MCF 10A (cell line): ENCODE measurements at regions of chr13 and their contacts with region 1.

Region 1: DNA sequence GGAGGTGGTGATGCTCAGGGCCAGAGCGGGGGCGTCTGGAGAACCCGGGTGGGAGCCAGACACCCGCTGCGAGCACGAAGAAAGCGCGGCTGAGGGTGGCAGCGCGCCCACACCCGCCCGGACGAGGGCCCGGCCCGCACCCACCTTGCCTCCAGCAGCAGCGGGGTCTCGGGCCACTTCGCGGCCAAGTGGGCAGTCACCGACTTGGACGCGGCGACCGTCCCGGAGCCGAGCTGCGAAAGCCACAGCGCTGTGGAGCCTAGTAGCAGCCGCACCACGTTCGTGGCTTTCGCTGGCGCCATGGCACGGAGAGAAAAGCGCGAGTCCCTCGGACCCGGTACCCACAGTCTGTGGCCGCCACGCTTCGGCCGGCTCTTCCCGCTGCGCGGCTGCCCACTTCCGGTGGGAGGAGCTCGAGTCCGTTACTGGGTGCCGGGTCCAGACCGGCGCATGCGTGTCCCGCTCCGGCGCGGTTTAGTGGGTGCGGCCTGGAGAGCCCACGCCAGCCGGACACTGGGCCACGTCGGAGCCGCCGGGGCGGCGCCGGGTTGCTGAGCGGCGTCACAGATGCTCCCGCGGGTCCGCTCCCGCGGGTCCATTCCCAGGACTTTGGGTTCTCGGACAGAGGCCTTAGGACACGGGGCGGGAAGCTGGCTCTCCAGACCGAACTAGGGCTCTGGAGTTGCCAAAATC is at the start of gene UGGT2:
- DNase-seq: peak; percentile 97
- H3K4me3 Mint-ChIP-seq: peak within 1 kb of the TSS; percentile 95
- H3K27ac Mint-ChIP-seq: peak within 1 kb of the TSS; percentile 92
- H3K4me1 Mint-ChIP-seq: peaks cover 23% of the 10 kb centered on the region
- H3K27me3 Mint-ChIP-seq: no peaks in the 10 kb centered on the region
- CTCF ChIP-seq: no peak
- total RNA-seq, gene UGGT2: 54.0 and 57.1 TPM in 2 replicates

Region 2: DNA sequence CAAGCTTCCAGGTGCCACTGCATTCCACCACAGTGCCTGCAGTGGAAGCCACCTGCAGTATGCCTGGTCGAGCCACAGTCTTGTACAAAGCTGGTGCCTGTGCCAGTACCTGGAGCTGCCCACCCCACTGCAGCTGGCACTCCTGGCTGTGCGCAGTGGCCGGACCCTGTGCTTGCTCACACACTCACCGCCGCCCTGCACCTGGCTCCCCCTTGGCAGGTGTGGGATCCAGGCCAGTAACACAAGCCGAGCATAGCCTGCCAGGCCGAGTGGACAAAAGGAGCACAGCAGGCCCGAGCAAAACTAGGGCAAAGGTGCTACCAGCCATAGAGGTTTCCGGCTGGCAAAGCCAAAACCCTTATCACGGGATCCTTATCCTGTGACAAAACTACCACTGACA is 18.5 kb before region 1 on chr13:
- CTCF ChIA-PET with region 1: interaction called, 5 read pairs
- POLR2A ChIA-PET with region 1: interaction called, 14 read pairs
- intact Hi-C with region 1: no loop called
- DNase-seq: no peak
- H3K4me3 Mint-ChIP-seq: no peak overlapping the region
- H3K27ac Mint-ChIP-seq: no peak overlapping the region
- H3K4me1 Mint-ChIP-seq: peaks cover 5% of the 10 kb centered on the region
- H3K27me3 Mint-ChIP-seq: no peaks in the 10 kb centered on the region
- CTCF ChIP-seq: no peak

Region 3: DNA sequence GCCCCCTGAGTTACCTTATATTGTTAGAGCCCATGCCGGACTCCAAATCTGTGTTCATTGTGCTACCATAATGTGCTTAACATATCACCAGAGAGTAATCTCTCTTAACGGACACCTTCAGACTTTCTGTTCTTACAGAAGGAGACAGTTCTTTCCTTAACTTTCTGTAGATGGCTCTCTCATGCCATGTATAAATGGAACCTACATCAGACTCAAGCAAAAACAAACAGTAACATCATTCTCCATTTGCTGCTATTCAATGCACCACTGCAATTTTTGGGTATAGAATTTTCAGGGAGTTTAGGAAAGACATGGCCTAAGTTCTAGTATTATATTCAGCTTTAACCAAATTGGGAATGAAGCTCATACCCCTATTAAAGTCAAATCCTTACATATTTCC is 12.7 kb after region 1 on chr13:
- CTCF ChIA-PET with region 1: interaction called, 9 read pairs
- POLR2A ChIA-PET with region 1: interaction called, 14 read pairs
- intact Hi-C with region 1: no loop called
- DNase-seq: no peak
- H3K4me3 Mint-ChIP-seq: no peak overlapping the region
- H3K27ac Mint-ChIP-seq: no peak overlapping the region
- H3K4me1 Mint-ChIP-seq: no peaks in the 10 kb centered on the region
- H3K27me3 Mint-ChIP-seq: peaks cover 51% of the 10 kb centered on the region
- CTCF ChIP-seq: no peak

Region 4: DNA sequence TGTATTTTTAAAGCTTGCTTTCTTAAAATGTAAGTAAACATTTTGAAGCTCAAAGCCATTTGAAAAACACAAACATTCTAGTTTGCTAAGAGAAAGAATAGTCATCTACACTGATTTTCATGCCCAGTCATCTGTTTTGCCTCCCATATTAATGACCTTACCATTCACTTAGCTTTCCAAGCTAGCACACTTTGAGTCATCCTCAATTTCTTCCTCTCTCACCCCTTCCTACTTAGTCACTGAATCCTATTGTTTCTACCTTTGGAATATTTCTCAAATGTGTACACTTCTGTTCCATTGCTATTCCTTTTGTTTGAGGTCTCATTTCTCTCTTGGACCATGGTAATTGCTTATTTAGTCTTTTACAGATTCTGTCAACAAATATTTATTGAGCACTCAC is 29.5 kb after region 1 on chr13:
- CTCF ChIA-PET with region 1: interaction called, 8 read pairs
- POLR2A ChIA-PET with region 1: interaction called, 11 read pairs
- intact Hi-C with region 1: no loop called
- DNase-seq: peak; percentile 25
- H3K4me3 Mint-ChIP-seq: no peak overlapping the region
- H3K27ac Mint-ChIP-seq: no peak overlapping the region
- H3K4me1 Mint-ChIP-seq: no peaks in the 10 kb centered on the region
- H3K27me3 Mint-ChIP-seq: peaks cover 22% of the 10 kb centered on the region
- CTCF ChIP-seq: no peak

Region 5: DNA sequence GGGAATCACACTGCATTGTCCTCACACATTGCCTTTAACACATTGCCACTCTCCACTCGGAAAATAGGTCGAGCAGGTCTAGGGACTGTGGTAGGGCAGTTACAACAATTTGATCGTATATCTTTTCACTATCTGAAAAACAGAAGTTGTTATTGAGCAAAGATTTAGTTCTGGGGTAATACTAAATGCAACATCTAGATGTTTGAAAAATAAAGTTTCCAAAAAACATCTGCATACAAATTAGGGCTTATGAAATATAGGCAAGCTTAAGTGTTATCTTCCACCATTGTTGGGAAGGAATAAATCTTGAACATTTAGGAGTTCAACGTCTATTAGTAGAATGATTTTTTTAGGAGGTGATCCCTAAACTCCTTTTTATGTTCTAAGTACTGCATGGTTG is 36.0 kb after region 1 on chr13:
- CTCF ChIA-PET with region 1: no interaction called
- POLR2A ChIA-PET with region 1: interaction called, 11 read pairs
- intact Hi-C with region 1: no loop called
- DNase-seq: no peak
- H3K4me3 Mint-ChIP-seq: peak overlapping the region; percentile 70
- H3K27ac Mint-ChIP-seq: no peak overlapping the region
- H3K4me1 Mint-ChIP-seq: no peaks in the 10 kb centered on the region
- H3K27me3 Mint-ChIP-seq: peaks cover 48% of the 10 kb centered on the region
- CTCF ChIP-seq: no peak

Region 6: DNA sequence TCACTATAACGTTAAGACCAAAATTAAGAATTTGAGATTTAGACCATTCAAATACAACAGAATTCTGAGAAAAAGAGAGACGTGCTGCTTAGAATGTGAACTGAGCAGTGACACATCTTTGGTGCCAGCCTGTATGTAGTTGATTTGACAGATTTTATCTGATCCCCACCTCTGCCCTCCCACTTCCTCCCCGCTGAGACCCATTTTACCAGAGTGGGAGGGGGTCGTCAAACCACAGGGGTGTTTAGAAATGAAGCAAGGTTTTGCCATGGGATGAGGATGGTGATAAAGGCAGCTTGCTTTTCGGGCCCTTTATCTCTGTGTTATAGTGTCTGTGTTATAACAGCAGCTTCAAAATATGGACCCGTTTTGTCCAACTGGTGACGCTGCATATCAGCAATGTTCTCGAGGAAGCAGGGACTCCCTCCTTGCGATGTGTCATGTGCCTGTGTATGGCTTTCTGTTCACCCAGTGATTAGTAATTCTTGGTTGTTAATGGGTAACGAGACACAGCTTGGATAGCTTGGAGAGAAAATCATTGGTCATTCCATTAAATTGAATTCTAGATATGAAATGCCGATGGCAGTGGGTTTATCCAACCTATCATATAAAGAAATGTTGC is 161.8 kb after region 1 on chr13:
- CTCF ChIA-PET with region 1: no interaction called
- POLR2A ChIA-PET with region 1: no interaction called
- intact Hi-C with region 1: no loop called
- DNase-seq: no peak
- H3K4me3 Mint-ChIP-seq: no peak overlapping the region
- H3K27ac Mint-ChIP-seq: no peak overlapping the region
- H3K4me1 Mint-ChIP-seq: peaks cover 2% of the 10 kb centered on the region
- H3K27me3 Mint-ChIP-seq: no peaks in the 10 kb centered on the region
- CTCF ChIP-seq: no peak